Right lobe of liver (tissue), 6 donors: ENCODE measurements at regions of chr11 and their contacts with region 1.

Region 1: GRCh38 chr11:72648384-72649136 is 25.7 kb downstream of the PDE2A start:
- DNase-seq: no peak
- ATAC-seq: no peak
- H3K4me3 ChIP-seq: no peak overlapping the region
- H3K27ac ChIP-seq: no peak overlapping the region
- H3K4me1 ChIP-seq: no peaks in the 10 kb centered on the region
- H3K27me3 ChIP-seq: no peaks in the 10 kb centered on the region
- CTCF ChIP-seq: no peak
- POLR2A ChIP-seq: no peak

Region 2: DNA sequence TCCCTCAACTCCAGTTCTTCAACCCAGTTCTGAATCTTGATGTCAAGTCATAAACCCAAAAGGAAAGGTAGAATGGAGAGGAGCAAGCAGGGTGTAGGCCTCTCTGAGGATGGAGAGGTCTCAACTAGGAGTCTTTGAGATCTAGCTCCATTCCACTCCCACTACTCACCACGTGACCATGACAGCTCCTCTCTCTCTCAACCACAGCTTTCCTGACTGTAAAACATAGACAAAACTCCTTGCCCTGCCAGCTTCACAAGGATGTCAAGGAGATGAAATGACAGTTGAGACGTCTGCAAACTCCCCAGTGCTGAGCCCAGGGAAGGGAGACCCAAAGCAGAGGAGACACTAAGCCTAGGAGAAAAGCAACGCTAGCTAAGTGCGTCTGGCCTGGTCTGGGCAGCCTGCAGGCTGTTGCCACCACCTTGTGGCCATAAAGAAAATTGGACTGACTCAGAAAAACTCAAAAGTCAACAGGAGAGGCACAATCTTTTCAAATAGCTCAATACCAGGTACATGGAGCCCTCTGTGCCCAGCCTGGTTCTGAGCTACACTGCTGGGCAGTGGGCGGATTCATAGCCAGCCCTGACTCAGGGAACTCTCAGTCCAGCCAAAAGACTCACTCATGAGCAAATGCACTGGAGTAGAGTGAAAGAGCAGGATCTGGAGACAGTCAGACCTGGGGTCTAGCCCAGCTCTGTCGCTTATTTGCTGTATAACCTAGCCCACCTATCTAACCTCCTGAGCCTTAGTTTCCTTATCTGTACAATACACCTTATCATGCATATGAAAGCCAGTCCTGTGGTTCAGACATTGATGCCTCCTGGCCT is 217.6 kb before region 1 on chr11:
- intact Hi-C with region 1: no loop called
- DNase-seq: peak in 1 of 3 donors; percentile 46
- ATAC-seq: peak; percentile 27 to 44 (median 35)
- H3K4me3 ChIP-seq: no peak overlapping the region
- H3K27ac ChIP-seq: no peak overlapping the region
- H3K4me1 ChIP-seq: peaks cover 0 to 11% (median 0%) of the 10 kb centered on the region in 4 donors
- H3K27me3 ChIP-seq: no peaks in the 10 kb centered on the region
- CTCF ChIP-seq: peak; percentile 62 to 76 (median 69)
- POLR2A ChIP-seq: no peak

Region 3: GRCh38 chr11:72541257-72541974 is 107.1 kb before region 1 on chr11:
- intact Hi-C with region 1: no loop called
- DNase-seq: no peak
- ATAC-seq: no peak
- H3K4me3 ChIP-seq: no peak overlapping the region
- H3K27ac ChIP-seq: no peak overlapping the region
- H3K4me1 ChIP-seq: no peaks in the 10 kb centered on the region
- H3K27me3 ChIP-seq: no peaks in the 10 kb centered on the region
- CTCF ChIP-seq: no peak
- POLR2A ChIP-seq: no peak

Region 4: DNA sequence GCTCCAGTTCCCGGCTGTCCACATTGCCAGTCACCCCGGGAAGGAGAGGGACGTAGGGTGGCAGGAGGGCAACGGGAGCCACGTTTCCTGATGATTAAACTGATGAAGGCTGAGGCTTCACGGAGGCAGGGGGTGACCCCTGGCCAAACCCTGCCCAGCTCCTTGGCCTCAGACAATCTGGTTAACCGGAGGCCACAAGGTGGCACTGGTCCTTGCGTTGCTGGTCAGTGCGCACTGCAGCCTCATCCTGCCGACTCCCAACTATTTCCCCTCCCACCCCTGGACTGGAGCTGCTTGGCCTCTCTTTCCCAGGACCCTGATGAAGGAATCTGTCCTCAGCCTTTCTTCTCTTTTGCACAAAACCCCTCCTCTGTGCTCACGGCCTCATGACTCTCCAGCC is 49.7 kb before region 1 on chr11:
- intact Hi-C with region 1: loop called in 1 of 2 experiments (anchors 5 kb)
- DNase-seq: peak in 1 of 3 donors; percentile 70
- ATAC-seq: peak; percentile 65 to 84 (median 72)
- H3K4me3 ChIP-seq: no peak overlapping the region
- H3K27ac ChIP-seq: no peak overlapping the region
- H3K4me1 ChIP-seq: no peaks in the 10 kb centered on the region
- H3K27me3 ChIP-seq: no peaks in the 10 kb centered on the region
- CTCF ChIP-seq: peak; percentile 50 to 65 (median 55)
- POLR2A ChIP-seq: no peak

Region 5: GRCh38 chr11:72722050-72722748 is 73.6 kb after region 1 on chr11:
- intact Hi-C with region 1: no loop called
- DNase-seq: peak; percentile 88 to 92 (median 92)
- ATAC-seq: peak; percentile 76 to 84 (median 82)
- H3K4me3 ChIP-seq: peak overlapping the region; percentile 54 to 73 (median 61)
- H3K27ac ChIP-seq: peak overlapping the region; percentile 74 to 93 (median 90)
- H3K4me1 ChIP-seq: peaks cover 0 to 48% (median 23%) of the 10 kb centered on the region in 4 donors
- H3K27me3 ChIP-seq: no peaks in the 10 kb centered on the region
- CTCF ChIP-seq: no peak
- POLR2A ChIP-seq: peak; percentile 69

Region 6: DNA sequence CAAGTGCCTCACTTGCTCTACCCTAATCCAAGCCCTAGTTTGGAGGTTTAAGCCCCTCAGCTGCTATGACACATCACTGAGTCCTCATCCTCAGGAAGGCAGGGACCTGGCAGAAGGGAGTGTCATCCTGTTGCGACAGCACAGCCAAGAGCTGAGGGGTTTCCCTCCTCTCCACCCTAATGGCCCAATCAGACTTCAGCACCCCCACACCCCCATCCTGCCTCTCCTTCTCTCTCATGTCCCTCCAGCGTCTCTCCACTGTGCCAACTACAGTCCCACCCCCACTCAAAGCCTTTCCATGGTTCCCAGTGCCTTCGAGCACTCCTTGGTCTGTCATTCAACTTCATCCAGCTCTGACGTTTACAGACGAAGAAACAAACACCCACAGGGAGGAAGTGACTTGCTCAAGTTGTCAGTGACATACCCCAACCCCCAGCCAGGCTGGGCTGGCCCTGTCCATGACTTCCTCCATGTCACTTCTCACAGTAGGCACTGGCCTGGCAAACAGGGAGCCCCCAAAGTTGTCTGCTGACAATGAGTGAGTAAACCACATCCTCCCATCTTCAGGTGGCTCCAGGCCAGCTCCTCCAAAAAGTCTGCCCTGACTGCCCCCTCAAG is 88.0 kb after region 1 on chr11:
- intact Hi-C with region 1: no loop called
- DNase-seq: peak in 2 of 3 donors; percentile 70 to 78
- ATAC-seq: peak; percentile 48 to 60 (median 54)
- H3K4me3 ChIP-seq: no peak overlapping the region
- H3K27ac ChIP-seq: peak overlapping the region; percentile 26 to 75 (median 73)
- H3K4me1 ChIP-seq: peaks cover 0 to 12% (median under 1%) of the 10 kb centered on the region in 4 donors
- H3K27me3 ChIP-seq: no peaks in the 10 kb centered on the region
- CTCF ChIP-seq: no peak
- POLR2A ChIP-seq: no peak